Caco-2 (cell line): ENCODE measurements at regions of chr10 and their contacts with region 1.

Region 1: GRCh38 chr10:14296065-14296709 is 34.5 kb downstream of the FRMD4A start:
- DNase-seq: peak; percentile 90 to 94
- H3K4me3 ChIP-seq: no peak overlapping the region
- H3K4me3 Mint-ChIP-seq: peak overlapping the region; percentile 38
- H3K27ac Mint-ChIP-seq: peak overlapping the region; percentile 91
- H3K4me1 ChIP-seq: peaks cover 26% of the 10 kb centered on the region
- H3K4me1 Mint-ChIP-seq: peaks cover 25% of the 10 kb centered on the region
- H3K27me3 ChIP-seq: no peaks in the 10 kb centered on the region
- H3K27me3 Mint-ChIP-seq: no peaks in the 10 kb centered on the region
- CTCF ChIP-seq: no peak

Region 2: DNA sequence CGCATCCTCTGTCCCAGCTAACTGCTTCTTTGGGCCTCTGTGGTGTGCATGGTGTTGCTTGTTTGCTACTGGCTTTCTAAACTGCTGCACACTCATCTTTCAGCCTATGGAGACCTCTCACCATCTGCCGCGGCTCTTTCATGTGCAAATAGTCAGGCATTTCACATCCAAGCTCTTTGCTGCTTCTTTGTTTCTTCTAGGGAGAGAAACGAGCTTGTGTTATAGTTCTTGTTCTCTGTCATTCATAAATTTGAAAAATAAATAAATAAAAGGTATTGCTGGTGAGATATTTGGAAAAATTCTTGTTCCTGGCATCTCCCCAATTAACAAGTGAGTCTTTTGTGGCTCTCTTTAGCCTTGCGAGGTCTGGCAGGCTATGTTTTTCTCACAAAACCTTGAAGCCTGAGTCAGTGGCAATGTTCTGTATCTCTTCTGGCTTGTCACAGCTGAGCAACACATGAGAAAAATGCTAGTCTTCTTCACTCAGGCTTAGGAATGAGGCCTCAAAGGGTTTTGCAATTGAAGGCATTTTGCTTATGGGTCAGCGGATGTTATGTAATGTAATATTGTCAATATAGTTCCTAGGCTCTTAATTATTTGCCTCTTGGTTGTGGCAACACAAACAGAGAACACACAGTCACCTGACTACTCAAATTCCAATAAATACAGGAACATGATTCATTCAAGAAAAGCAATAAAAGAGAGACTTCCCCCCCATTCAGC is 239.4 kb before region 1 on chr10:
- CTCF ChIA-PET with region 1: no interaction called
- POLR2A ChIA-PET with region 1: no interaction called
- intact Hi-C with region 1: no loop called
- DNase-seq: peak in 1 of 2 experiments; percentile 28
- H3K4me3 ChIP-seq: no peak overlapping the region
- H3K4me3 Mint-ChIP-seq: no peak overlapping the region
- H3K27ac Mint-ChIP-seq: no peak overlapping the region
- H3K4me1 ChIP-seq: no peaks in the 10 kb centered on the region
- H3K4me1 Mint-ChIP-seq: no peaks in the 10 kb centered on the region
- H3K27me3 ChIP-seq: no peaks in the 10 kb centered on the region
- H3K27me3 Mint-ChIP-seq: no peaks in the 10 kb centered on the region
- CTCF ChIP-seq: no peak

Region 3: GRCh38 chr10:14259696-14260566 is 36.3 kb before region 1 on chr10:
- CTCF ChIA-PET with region 1: interaction called, 3 read pairs
- POLR2A ChIA-PET with region 1: no interaction called
- intact Hi-C with region 1: loop called (anchors 1 kb)
- DNase-seq: peak; percentile 60 to 70
- H3K4me3 ChIP-seq: no peak overlapping the region
- H3K4me3 Mint-ChIP-seq: no peak overlapping the region
- H3K27ac Mint-ChIP-seq: no peak overlapping the region
- H3K4me1 ChIP-seq: peaks cover 15% of the 10 kb centered on the region; the same call in 1 of the 2 replicates
- H3K4me1 Mint-ChIP-seq: peaks cover 7% of the 10 kb centered on the region
- H3K27me3 ChIP-seq: no peaks in the 10 kb centered on the region
- H3K27me3 Mint-ChIP-seq: no peaks in the 10 kb centered on the region
- CTCF ChIP-seq: no peak

Region 4: DNA sequence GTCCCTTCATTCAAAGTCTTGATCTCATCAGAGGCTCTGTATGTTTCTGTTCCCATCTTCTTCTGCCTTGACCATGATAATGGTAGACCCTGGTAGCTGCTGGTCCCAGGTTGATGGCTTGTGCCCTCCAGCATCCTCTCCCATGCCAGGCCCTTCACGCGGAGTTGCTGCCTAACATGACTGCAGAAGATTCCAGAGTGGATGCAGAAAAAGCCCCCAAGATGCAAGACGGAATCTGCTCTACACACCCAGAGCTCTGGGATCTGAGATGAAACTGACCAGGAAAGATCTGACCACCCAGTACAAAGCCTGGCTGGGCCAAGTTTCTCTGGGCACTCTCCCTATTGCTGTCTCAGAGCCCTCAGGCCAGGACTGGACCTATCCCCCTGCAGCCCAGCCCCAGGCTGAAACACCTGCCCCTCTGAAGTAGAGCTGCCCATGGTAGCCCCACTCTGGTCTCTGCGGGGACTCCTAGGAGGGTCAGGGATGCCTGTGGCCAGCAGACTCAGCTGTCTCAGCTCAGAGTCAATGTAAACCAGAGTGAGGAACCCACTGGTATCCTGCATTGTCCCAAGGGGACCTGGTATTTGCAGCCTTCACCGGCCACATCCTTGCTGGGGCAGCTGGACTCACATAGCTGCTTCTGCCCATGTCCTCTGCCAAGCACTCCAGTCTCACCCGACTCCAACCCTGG is 44.0 kb after region 1 on chr10:
- CTCF ChIA-PET with region 1: no interaction called
- POLR2A ChIA-PET with region 1: no interaction called
- intact Hi-C with region 1: no loop called
- DNase-seq: no peak
- H3K4me3 ChIP-seq: no peak overlapping the region
- H3K4me3 Mint-ChIP-seq: no peak overlapping the region
- H3K27ac Mint-ChIP-seq: no peak overlapping the region
- H3K4me1 ChIP-seq: no peaks in the 10 kb centered on the region
- H3K4me1 Mint-ChIP-seq: peaks cover 8% of the 10 kb centered on the region
- H3K27me3 ChIP-seq: no peaks in the 10 kb centered on the region
- H3K27me3 Mint-ChIP-seq: peaks cover 19% of the 10 kb centered on the region
- CTCF ChIP-seq: no peak

Region 5: GRCh38 chr10:14374745-14375445 is 78.7 kb after region 1 on chr10:
- CTCF ChIA-PET with region 1: no interaction called
- POLR2A ChIA-PET with region 1: no interaction called
- intact Hi-C with region 1: loop called (anchors 2 kb)
- DNase-seq: no peak
- H3K4me3 ChIP-seq: no peak overlapping the region
- H3K4me3 Mint-ChIP-seq: no peak overlapping the region
- H3K27ac Mint-ChIP-seq: no peak overlapping the region
- H3K4me1 ChIP-seq: peaks cover 27% of the 10 kb centered on the region
- H3K4me1 Mint-ChIP-seq: peaks cover 23% of the 10 kb centered on the region
- H3K27me3 ChIP-seq: no peaks in the 10 kb centered on the region
- H3K27me3 Mint-ChIP-seq: no peaks in the 10 kb centered on the region
- CTCF ChIP-seq: no peak